ENCODE measurements at regions of chr12 and their contacts with region 1.

Region 1: GRCh38 chr12:106136263-106136662 is 2.5 kb downstream of the NUAK1 start:
- DNase-seq: peak; percentile 94
- ATAC-seq: peak; percentile 11

Region 2: DNA sequence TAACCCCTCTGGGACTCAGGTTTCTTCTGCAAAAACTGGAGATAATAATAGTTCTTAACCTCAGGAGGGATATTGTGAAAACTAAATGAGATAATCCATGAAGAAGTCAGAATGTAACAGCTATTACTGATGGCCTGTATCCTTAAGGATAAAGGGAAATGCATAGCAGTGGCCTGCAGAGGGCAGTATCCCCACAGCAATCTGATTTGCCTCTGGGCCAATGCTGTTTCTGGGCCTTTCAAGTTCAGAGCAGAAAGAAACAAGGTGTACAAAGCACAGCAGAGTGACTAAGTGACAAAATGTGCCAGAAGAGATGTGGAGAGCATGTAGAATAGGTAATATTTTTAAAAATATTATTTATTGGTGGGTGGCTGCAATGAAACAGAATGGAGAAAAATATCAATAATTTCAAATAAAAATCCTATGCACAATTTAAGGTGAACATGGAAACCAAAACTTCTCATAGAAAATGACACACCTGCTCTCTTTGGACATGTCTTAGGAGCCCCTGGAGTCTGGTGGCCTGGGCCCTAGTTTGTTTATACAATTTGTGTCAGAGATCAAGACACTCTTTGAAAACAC is 715.5 kb before region 1 on chr12:
- intact Hi-C with region 1: loop called (anchors 5 kb)
- DNase-seq: peak; percentile 70
- ATAC-seq: peak; percentile 95

Region 3: DNA sequence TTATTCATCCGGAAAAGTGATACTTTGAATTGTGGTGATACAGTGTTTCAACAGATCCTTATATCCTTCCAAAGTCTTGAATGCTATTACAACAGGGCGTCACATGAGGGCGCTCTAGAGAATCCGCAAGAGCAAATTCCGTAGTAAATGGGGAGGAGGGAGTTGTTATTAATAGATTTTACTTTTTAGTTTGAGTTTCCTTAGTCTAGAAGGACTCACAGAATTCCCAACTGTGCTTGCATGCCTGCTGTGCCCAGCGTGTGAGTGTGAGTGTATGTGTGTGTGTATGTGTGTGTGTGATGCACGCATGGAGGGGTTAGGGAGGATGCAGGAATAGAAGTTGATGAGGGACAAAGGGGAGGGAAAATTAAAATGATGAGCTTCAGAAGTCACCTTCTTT is 430.5 kb before region 1 on chr12:
- intact Hi-C with region 1: loop called (anchors 5 kb)
- DNase-seq: no peak
- ATAC-seq: peak; percentile 69

Region 4: DNA sequence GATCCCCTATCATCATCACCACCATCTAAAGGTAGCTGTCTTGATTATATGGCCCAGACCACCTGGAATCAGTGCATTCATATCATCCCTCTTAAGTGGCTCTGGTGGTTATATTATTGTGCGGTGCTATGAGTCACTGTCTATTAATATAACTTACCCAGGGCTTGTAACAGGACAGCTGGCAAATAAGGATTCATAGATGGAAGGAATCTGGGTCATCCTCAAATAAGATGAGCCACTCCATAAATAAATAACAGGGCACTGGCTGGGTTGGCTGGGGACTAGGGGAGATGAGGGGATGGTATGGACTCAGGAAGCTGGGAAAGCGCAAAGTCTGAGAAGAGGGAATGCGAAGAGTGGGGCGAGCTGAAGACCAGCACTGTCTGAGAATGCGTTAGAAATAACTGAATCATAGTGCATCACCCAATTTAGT is 213.6 kb before region 1 on chr12:
- intact Hi-C with region 1: loop called (anchors 10 kb)
- DNase-seq: no peak
- ATAC-seq: peak; percentile 90

Region 5: GRCh38 chr12:106345739-106346138 is 209.5 kb after region 1 on chr12:
- intact Hi-C with region 1: no loop called
- DNase-seq: no peak
- ATAC-seq: peak; percentile 38